AG04449 (cell line): ENCODE measurements at regions of chr2 and their contacts with region 1.

Region 1: GRCh38 chr2:225660262-225661131 is 261.0 kb downstream of the NYAP2 start:
- DNase-seq: no peak
- H3K4me3 ChIP-seq: no peak overlapping the region
- CTCF ChIP-seq: peak; percentile 75

Region 2: DNA sequence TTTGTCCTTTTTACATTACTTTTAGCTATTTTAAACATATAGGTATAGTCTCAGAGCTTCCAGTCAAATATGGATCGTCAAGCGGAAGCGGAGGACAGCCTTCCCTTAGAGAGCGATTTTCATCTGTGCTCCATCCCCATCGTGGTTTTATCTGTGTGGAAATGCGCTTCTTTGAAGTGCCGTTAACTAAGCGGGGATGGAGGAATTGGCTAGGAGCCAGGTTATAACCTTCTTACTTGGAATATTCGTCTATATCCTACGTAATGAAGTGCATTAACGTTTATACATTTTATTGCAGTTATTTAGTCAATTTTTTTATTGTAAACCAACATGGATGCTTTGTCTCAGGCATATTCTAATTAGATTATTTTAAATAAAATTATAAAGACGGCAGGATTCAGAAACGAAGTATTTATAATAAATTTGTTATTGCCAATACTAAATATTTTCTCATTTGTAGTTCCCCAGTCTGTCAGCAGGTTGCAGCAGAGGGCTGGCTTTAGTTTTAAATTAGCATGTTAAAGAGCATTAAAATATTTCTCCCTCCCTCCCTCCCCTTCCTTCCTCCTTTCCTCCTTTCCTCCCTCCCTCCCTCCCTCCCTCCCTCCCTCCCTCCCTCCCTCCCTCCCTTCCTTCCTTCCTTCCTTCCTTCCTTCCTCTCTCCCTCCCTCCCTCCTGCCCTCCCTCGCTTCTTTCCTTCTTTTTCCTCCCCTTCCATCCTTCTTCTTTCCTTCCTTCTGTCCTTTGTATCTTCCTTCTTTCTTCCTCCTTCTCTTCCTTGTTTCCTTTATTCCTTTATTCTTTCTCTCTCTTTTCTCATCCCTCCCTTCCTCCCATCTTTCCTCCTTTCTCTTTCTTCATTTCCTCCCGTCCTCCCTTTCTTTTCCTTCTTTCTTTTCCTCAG is 537.7 kb before region 1 on chr2:
- CTCF ChIA-PET with region 1: interaction called, 87 read pairs
- POLR2A ChIA-PET with region 1: no interaction called
- DNase-seq: no peak
- H3K4me3 ChIP-seq: no peak overlapping the region
- CTCF ChIP-seq: peak; percentile 36

Region 3: GRCh38 chr2:225282858-225283710 is 377.4 kb before region 1 on chr2:
- CTCF ChIA-PET with region 1: interaction called, 20 read pairs
- POLR2A ChIA-PET with region 1: no interaction called
- DNase-seq: no peak
- H3K4me3 ChIP-seq: no peak overlapping the region
- CTCF ChIP-seq: peak; percentile 77

Region 4: DNA sequence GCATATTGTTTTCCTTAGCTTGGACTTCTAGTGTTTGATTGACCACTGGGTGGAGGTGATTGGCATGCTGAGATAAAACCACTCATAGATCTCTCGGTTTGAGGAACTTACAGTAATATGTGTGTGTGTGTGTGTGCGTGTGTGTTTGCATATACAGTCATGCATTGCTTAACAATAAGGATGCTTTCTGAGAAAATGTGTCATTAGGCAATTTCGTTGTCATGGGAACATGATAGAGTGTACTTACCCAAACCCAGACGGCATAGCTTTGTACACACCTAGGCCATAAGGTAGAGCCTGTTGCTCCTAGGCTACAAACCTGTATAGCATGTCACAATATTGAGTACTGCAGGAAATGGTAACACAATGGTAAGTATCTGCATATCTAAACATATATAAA is 93.7 kb before region 1 on chr2:
- CTCF ChIA-PET with region 1: no interaction called
- POLR2A ChIA-PET with region 1: no interaction called
- DNase-seq: no peak
- H3K4me3 ChIP-seq: no peak overlapping the region
- CTCF ChIP-seq: no peak

Region 5: DNA sequence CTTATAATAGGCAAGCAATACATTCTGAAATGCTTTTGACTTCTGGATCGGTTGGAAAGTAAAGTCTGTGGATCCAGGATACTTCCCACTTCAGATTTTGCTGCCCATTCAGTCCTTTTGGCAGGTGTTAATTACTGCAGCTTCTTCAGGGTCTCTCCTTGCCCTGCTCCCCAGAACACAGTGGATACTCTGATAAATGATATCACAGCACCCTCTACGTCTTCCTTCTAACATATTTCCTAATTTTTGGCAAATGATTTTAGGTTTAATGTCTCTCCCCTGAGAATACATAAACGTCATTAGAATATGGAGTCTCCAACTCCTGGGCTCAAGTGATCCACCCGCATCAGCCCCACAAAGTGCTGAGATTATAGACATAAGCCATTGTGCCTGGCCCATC is 11.2 kb before region 1 on chr2:
- CTCF ChIA-PET with region 1: interaction called, 14 read pairs
- POLR2A ChIA-PET with region 1: no interaction called
- DNase-seq: no peak
- H3K4me3 ChIP-seq: no peak overlapping the region
- CTCF ChIP-seq: no peak

Region 6: DNA sequence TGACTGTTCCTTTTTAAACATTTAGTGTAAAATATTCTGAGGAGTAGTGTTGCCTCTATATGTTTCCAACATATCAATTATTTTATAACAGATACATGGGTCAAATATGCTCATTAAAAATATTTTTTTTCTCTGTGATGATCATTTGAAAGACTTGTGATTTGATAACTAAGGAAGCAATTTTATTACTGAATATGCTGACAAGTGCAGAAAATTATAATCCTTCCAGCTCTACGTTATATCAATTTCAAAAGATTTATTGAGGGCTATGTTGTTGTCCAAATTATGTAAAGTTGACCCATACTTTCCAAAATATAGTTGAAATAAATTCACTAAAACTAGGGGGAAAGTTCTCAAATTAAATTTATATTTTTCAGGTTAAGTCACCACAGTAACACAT is 29.7 kb after region 1 on chr2:
- CTCF ChIA-PET with region 1: no interaction called
- POLR2A ChIA-PET with region 1: no interaction called
- DNase-seq: no peak
- H3K4me3 ChIP-seq: no peak overlapping the region
- CTCF ChIP-seq: no peak